Breast epithelium (tissue), 4 donors: ENCODE measurements at regions of chr11 and their contacts with region 1.

Region 1: DNA sequence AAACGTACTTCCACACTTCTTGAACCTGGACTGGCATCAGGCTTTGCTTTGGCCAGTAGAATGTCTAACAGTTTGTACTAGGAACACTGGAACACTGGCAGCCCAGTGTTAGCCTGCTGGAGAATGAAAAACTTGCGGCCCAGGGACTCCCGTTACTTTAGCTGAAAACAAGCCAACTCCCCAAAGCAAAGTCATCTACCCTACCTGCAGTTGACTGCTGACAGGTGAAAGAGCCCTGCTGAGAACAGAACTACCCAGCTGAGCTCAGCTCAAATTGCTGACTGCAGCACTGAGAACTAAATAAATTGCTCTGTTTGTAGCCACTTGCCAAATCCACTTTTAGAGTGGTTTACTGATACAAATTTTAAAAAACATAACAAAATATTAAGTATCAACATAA is 342.5 kb downstream of the LRRC4C start:
- DNase-seq: no peak
- H3K4me3 ChIP-seq: no peak overlapping the region
- H3K27ac ChIP-seq: no peak overlapping the region
- H3K4me1 ChIP-seq: no peaks in the 10 kb centered on the region
- H3K27me3 ChIP-seq: no peaks in the 10 kb centered on the region
- CTCF ChIP-seq: no peak
- POLR2A ChIP-seq: no peak

Region 2: DNA sequence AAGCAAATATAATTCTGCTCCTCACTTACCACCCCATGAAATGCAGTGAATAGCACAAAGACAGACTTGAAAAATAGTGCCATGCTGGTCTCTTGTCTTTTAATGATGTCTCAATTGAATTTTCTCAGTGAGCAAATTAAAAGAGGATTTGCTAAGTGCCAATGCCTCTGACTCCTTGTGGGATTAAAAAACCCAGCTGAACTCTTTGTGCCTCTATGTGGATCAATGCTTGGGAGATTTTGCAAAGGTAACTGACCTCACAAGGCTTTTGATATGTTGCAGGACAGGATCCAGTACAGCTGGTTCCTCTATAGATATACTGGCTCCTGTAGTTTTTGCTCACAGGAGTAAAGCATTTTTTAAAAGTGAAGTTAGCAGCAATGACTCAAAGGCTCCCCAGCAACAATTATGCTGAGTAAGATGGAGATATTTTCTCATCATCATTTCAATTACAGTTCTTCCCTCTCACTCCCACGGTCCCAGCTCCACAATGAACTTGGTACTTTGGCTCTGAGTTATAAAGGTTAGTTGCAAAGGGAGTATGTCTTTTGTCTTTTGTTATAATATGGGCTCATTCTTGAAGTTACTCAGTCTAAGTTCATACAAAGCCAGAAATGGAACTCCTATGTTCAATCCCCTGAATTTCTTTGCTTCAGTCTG is 129.1 kb before region 1 on chr11:
- intact Hi-C with region 1: no loop called
- DNase-seq: no peak
- H3K4me3 ChIP-seq: no peak overlapping the region
- H3K27ac ChIP-seq: no peak overlapping the region
- H3K4me1 ChIP-seq: no peaks in the 10 kb centered on the region
- H3K27me3 ChIP-seq: no peaks in the 10 kb centered on the region
- CTCF ChIP-seq: no peak
- POLR2A ChIP-seq: no peak

Region 3: GRCh38 chr11:41102471-41102870 is 14.5 kb before region 1 on chr11:
- intact Hi-C with region 1: loop called (anchors 2 kb)
- DNase-seq: no peak
- H3K4me3 ChIP-seq: no peak overlapping the region
- H3K27ac ChIP-seq: no peak overlapping the region
- H3K4me1 ChIP-seq: no peaks in the 10 kb centered on the region
- H3K27me3 ChIP-seq: no peaks in the 10 kb centered on the region
- CTCF ChIP-seq: no peak
- POLR2A ChIP-seq: no peak